ENCODE measurements at regions of chr12 and their contacts with region 1.

Region 1: GRCh38 chr12:6423267-6424007 is 21.3 kb upstream of the CD27 start:
- DNase-seq: peak; percentile 89
- H3K4me3 ChIP-seq: no peak overlapping the region
- H3K27ac ChIP-seq: no peak overlapping the region
- H3K4me1 ChIP-seq: peaks cover 3% of the 10 kb centered on the region
- H3K27me3 ChIP-seq: no peaks in the 10 kb centered on the region
- CTCF ChIP-seq: peak; percentile 91

Region 2: GRCh38 chr12:6145564-6145963 is 277.9 kb before region 1 on chr12:
- intact Hi-C with region 1: no loop called
- DNase-seq: no peak
- H3K4me3 ChIP-seq: no peak overlapping the region
- H3K27ac ChIP-seq: no peak overlapping the region
- H3K4me1 ChIP-seq: no peaks in the 10 kb centered on the region
- H3K27me3 ChIP-seq: no peaks in the 10 kb centered on the region
- CTCF ChIP-seq: no peak

Region 3: DNA sequence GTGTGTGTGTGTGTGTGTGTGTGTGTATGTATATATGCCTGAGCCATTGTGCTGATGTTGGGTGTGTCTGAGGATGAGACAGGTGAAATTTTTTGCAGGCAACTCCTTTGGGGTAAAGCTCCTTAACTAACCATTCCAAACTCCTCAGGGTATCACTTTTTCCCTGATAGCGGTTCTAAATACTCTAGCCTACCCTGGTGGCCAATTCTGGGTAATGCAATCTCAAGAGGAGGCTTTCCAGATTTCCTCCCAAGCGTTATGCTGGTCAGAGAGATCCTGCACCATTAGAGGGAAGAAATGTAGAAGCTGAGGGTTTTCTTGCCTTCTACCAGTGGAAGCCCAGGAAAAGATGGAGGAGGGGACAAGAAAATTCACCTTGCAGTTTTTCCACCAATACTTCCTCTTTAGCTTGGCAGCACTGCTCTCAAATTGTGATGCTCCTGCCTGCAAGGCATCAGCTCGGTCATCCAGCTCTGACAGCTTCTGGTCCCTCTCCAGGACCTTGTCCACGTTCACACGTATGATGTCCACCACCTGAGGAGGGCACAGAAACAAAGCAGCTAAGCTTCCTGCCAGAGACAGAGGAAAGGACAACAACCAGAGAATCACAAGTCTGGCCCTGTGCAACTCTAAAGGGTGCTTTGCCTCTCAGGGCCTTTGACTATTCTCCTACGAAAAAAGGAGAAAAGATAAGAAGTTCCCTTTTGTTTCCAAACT is 42.2 kb after region 1 on chr12:
- intact Hi-C with region 1: loop called (anchors 5 kb)
- DNase-seq: peak; percentile 77
- H3K4me3 ChIP-seq: no peak overlapping the region
- H3K27ac ChIP-seq: no peak overlapping the region
- H3K4me1 ChIP-seq: peaks cover 14% of the 10 kb centered on the region
- H3K27me3 ChIP-seq: no peaks in the 10 kb centered on the region
- CTCF ChIP-seq: peak; percentile 78

Region 4: DNA sequence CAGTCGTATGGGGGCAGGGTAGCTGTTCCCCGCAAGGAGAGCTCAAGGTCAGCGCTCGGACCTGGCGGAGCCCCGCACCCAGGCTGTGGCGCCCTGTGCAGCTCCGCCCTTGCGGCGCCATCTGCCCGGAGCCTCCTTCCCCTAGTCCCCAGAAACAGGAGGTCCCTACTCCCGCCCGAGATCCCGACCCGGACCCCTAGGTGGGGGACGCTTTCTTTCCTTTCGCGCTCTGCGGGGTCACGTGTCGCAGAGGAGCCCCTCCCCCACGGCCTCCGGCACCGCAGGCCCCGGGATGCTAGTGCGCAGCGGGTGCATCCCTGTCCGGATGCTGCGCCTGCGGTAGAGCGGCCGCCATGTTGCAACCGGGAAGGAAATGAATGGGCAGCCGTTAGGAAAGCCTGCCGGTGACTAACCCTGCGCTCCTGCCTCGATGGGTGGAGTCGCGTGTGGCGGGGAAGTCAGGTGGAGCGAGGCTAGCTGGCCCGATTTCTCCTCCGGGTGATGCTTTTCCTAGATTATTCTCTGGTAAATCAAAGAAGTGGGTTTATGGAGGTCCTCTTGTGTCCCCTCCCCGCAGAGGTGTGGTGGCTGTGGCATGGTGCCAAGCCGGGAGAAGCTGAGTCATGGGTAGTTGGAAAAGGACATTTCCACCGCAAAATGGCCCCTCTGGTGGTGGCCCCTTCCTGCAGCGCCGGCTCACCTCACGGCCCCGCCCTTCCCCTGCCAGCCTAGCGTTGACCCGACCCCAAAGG is 111.7 kb after region 1 on chr12:
- intact Hi-C with region 1: loop called (anchors 5 kb)
- DNase-seq: peak; percentile 73
- H3K4me3 ChIP-seq: peak overlapping the region; percentile 99
- H3K27ac ChIP-seq: peak overlapping the region; percentile 99
- H3K4me1 ChIP-seq: peaks cover 28% of the 10 kb centered on the region
- H3K27me3 ChIP-seq: no peaks in the 10 kb centered on the region
- CTCF ChIP-seq: no peak

Measured in colonic mucosa (tissue), 4 donors.